AG04450 (cell line): ENCODE measurements at regions of chr5 and their contacts with region 1.

Region 1: GRCh38 chr5:126808521-126808988 is 31.6 kb downstream of the LMNB1 start:
- DNase-seq: no peak
- H3K4me3 ChIP-seq: no peak overlapping the region
- H3K27ac ChIP-seq: no peak overlapping the region
- H3K27me3 ChIP-seq: no peaks in the 10 kb centered on the region
- CTCF ChIP-seq: peak; percentile 60

Region 2: DNA sequence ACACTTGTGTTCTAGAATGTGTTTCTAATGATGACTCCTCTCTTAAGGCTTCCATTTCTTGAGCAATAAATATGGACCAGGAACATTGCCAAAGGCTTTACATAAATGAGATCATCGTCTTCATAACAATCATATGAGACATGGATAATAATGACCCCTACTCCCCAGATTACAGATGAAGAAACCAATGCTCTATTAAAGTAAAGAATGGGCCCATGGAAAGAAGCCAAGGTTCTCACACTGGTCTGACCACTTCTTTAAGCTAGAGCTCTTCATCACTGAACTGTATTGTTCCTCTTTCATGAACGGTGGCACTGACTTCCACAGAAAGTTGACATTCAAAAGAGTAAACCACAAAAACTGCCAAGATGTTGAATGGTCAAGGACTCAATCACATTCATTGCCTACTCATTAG is 156.5 kb after region 1 on chr5:
- CTCF ChIA-PET with region 1: interaction called, 10 read pairs
- POLR2A ChIA-PET with region 1: no interaction called
- DNase-seq: peak; percentile 72
- H3K4me3 ChIP-seq: no peak overlapping the region
- H3K27ac ChIP-seq: no peak overlapping the region
- H3K27me3 ChIP-seq: no peaks in the 10 kb centered on the region
- CTCF ChIP-seq: no peak